ENCODE measurements at regions of chr12 and their contacts with region 1.

Region 1: DNA sequence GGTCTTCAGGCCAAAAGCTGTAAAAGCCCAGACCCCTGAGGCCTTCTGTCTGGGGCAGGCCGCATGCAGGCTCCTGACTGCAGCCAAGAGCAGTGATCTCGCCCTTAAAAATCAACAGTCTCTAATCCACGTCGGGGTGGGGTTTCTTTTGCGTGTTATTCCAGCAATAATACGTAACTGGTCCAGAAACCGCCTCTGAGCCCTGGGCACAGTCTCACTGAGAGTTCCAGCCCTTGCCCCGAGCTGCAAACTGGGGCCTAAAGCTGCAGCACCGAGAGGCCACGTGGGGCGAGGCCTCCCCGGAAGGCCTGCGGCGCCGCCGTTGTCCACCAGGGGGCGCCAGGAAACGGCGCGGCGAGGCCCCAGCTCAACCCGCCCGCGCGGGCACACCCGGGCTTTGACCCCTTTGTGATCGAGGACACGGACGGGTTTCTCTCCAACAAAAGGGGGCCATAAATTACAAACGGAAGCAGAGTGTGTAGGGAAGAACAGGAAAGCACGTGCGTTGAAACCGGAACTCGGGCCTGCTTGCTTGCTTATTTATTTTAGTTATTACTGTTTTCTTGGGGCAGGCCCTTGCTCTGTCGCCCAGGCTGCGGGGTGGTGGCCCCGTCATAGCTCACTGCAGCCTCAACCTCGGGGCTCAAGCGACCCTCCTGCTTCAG is 87.2 kb downstream of the NINJ2 start:
- DNase-seq: peak; percentile 64
- H3K4me3 ChIP-seq: no peak overlapping the region
- H3K27ac ChIP-seq: peak overlapping the region; percentile 85
- H3K4me1 ChIP-seq: peaks cover 39% of the 10 kb centered on the region
- H3K27me3 ChIP-seq: no peaks in the 10 kb centered on the region
- CTCF ChIP-seq: peak; percentile 89 to 98

Region 2: GRCh38 chr12:630656-631632 is 54.9 kb after region 1 on chr12:
- CTCF ChIA-PET with region 1: no interaction called
- dilution Hi-C with region 1: no loop called
- in situ Hi-C with region 1: no loop called
- intact Hi-C with region 1: loop called (anchors 10 kb)
- DNase-seq: no peak
- H3K4me3 ChIP-seq: no peak overlapping the region
- H3K27ac ChIP-seq: no peak overlapping the region
- H3K4me1 ChIP-seq: peaks cover 18% of the 10 kb centered on the region
- H3K27me3 ChIP-seq: no peaks in the 10 kb centered on the region
- CTCF ChIP-seq: no peak

Measured in mammary epithelial cell (primary cell).